ENCODE measurements at regions of chr1 and their contacts with region 1.

Region 1: DNA sequence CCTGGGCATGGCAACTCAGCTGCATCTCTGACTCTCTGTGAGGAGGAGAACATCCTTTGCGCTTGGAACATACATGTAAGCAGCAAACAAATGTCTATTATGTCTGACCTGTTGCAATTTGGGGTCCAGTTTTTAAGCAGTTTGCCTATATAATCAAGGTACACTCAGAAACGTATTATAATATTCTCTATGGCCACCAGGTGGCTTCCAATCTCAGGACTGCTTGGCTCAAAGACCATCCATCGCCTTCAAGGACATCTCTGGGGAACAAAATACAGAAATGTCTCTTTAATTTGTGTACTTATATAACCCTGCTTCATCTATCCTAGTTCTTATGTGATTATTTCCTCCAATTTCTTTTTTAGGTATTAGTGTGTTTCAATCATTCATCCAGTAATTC is 227.2 kb downstream of the OLFM3 start:
- DNase-seq: peak; percentile 51
- ATAC-seq: peak; percentile 43; the same call in 1 of the 2 replicates
- H3K4me3 ChIP-seq: no peak overlapping the region
- H3K27ac ChIP-seq: no peak overlapping the region
- H3K4me1 ChIP-seq: no peaks in the 10 kb centered on the region
- H3K27me3 ChIP-seq: no peaks in the 10 kb centered on the region
- CTCF ChIP-seq: peak; percentile 70

Region 2: DNA sequence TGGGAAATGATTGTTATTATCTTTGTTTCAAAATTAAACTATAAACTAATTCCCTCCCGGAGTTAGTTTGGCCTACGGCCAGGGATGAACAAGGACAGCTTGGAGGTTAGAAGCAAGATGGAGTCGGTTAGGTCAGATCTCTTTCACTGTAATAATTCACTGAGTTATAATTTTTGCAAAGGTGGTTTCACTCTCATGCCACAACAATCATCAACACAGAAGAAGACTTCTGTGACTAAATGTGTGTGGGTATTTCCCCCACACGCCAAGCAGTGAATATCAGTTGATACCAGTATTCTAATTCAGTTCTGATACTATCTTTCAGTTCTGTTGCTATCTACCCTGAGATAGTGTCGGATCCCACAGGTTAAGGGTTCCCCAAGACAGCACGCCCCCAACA is 317.6 kb before region 1 on chr1:
- CTCF ChIA-PET with region 1: no interaction called
- POLR2A ChIA-PET with region 1: no interaction called
- intact Hi-C with region 1: no loop called
- DNase-seq: no peak
- ATAC-seq: no peak
- H3K4me3 ChIP-seq: no peak overlapping the region
- H3K27ac ChIP-seq: no peak overlapping the region
- H3K4me1 ChIP-seq: no peaks in the 10 kb centered on the region
- H3K27me3 ChIP-seq: peaks cover 50% of the 10 kb centered on the region
- CTCF ChIP-seq: no peak

Region 3: GRCh38 chr1:103469801-103470200 is 1700.3 kb after region 1 on chr1:
- CTCF ChIA-PET with region 1: no interaction called
- POLR2A ChIA-PET with region 1: no interaction called
- intact Hi-C with region 1: loop called (anchors 5 kb)
- DNase-seq: no peak
- ATAC-seq: no peak
- H3K4me3 ChIP-seq: no peak overlapping the region
- H3K27ac ChIP-seq: no peak overlapping the region
- H3K4me1 ChIP-seq: no peaks in the 10 kb centered on the region
- H3K27me3 ChIP-seq: peaks cover 43% of the 10 kb centered on the region
- CTCF ChIP-seq: no peak